Activated CD4-positive, alpha-beta T cell treated with anti-CD3 and anti-CD28 coated beads for 36 hours (primary cell): ENCODE measurements at regions of chr5 and their contacts with region 1.

Region 1: GRCh38 chr5:73558950-73559349 is 6.5 kb downstream of the ANKRA2 start:
- DNase-seq: no peak
- ATAC-seq: no peak
- H3K4me3 Mint-ChIP-seq: no peak overlapping the region
- H3K27ac Mint-ChIP-seq: no peak overlapping the region
- H3K4me1 Mint-ChIP-seq: peaks cover 8% of the 10 kb centered on the region
- H3K27me3 Mint-ChIP-seq: no peaks in the 10 kb centered on the region

Region 2: DNA sequence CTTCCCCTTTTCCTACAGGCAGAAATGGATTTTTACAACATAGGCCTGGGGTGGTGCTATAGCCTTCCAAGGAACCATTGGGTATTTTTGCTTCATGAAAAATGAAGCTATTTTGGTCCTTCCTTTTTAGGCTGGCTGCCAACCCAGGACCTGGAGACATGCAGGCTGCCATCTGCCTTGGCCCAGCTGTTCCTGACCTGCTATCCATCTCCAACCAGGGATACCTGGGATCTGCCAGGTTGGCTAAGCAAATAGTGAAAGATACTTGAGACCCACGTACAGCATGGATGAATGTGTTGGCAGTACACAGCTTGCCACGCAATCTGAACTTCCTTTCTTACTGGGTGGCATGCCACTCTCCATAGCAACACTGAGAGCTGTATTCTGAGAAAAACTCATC is 1270.0 kb before region 1 on chr5:
- CTCF ChIA-PET with region 1: no interaction called
- POLR2A ChIA-PET with region 1: no interaction called
- intact Hi-C with region 1: no loop called
- DNase-seq: no peak
- ATAC-seq: no peak
- H3K4me3 Mint-ChIP-seq: no peak overlapping the region
- H3K27ac Mint-ChIP-seq: no peak overlapping the region
- H3K4me1 Mint-ChIP-seq: no peaks in the 10 kb centered on the region
- H3K27me3 Mint-ChIP-seq: no peaks in the 10 kb centered on the region

Region 3: DNA sequence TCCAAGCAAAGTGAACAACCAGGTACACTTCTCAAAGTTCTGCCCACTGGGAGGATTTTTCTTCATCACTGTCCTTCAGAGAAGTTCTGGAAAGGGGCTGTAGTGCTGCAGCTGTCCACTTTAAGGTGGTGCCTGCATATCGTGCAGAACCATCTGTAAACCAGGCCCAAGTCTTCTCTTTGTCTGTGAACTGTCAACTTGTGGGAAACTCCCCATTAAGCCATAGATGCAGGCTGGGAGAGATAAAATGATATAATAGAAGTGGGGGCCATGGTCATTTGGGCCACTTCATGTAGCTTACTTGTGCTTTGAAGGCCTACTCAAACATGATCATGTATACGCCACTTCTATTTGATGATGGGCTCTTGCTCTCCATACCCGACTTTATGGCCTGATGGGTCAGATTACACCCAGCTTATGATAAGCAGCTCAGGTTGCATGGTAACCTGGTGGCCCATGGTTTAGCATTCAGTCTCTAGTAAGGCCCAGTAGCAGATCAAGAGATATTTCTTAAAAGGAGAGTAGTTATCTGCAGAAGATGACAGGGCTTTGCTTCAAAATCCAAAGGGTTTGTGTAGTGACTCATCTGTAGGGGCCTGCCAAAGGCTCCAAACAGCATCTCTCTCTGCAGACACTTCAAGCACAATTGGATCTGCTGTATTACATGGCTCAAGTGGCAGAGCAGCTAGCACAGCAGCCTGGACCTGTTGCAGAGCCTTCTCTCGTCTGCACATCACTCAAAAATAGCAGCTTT is 76.4 kb before region 1 on chr5:
- CTCF ChIA-PET with region 1: no interaction called
- POLR2A ChIA-PET with region 1: no interaction called
- intact Hi-C with region 1: no loop called
- DNase-seq: no peak
- ATAC-seq: no peak
- H3K4me3 Mint-ChIP-seq: no peak overlapping the region
- H3K27ac Mint-ChIP-seq: no peak overlapping the region
- H3K4me1 Mint-ChIP-seq: no peaks in the 10 kb centered on the region
- H3K27me3 Mint-ChIP-seq: peaks cover 27% of the 10 kb centered on the region

Region 4: GRCh38 chr5:73534011-73534644 is 24.8 kb before region 1 on chr5:
- CTCF ChIA-PET with region 1: interaction called, 15 read pairs
- POLR2A ChIA-PET with region 1: no interaction called
- intact Hi-C with region 1: no loop called
- DNase-seq: no peak
- ATAC-seq: no peak
- H3K4me3 Mint-ChIP-seq: no peak overlapping the region
- H3K27ac Mint-ChIP-seq: no peak overlapping the region
- H3K4me1 Mint-ChIP-seq: no peaks in the 10 kb centered on the region
- H3K27me3 Mint-ChIP-seq: peaks cover 16% of the 10 kb centered on the region

Region 5: DNA sequence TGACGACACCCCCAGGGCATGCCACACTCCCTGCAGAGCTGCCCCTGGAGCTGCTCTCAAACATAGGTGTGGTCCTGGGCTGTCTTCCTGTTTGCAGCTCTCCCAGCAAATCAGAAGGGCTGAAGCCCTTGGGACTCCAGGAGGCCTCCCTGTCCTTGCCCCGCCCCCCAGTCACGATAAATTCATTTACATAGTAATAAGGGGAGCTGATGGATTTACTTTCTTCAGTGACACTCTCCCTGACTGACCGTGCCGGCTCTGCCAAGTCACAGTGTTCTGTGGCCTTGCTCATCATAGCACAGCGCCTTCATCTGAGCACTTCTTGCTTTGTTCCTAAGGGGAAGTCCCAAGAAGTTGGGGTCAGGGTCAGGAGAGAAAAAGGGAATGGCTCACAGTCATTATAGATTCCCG is 960.2 kb after region 1 on chr5:
- CTCF ChIA-PET with region 1: no interaction called
- POLR2A ChIA-PET with region 1: no interaction called
- intact Hi-C with region 1: no loop called
- DNase-seq: no peak
- ATAC-seq: no peak
- H3K4me3 Mint-ChIP-seq: no peak overlapping the region
- H3K27ac Mint-ChIP-seq: no peak overlapping the region
- H3K4me1 Mint-ChIP-seq: no peaks in the 10 kb centered on the region
- H3K27me3 Mint-ChIP-seq: peaks cover 9% of the 10 kb centered on the region